OCI-LY7 (cell line): ENCODE measurements at regions of chr2 and their contacts with region 1.

Region 1: GRCh38 chr2:226906163-226906693 is 70.4 kb downstream of the RHBDD1 start:
- DNase-seq: peak; percentile 93
- H3K4me3 ChIP-seq: peak overlapping the region; percentile 70
- H3K27ac ChIP-seq: peak overlapping the region; percentile 98
- H3K4me1 ChIP-seq: peaks cover 95% of the 10 kb centered on the region
- CTCF ChIP-seq: no peak

Region 2: GRCh38 chr2:225270861-225271260 is 1635.4 kb before region 1 on chr2:
- CTCF ChIA-PET with region 1: no interaction called
- POLR2A ChIA-PET with region 1: no interaction called
- intact Hi-C with region 1: loop called (anchors 10 kb)
- DNase-seq: peak; percentile 92
- H3K4me3 ChIP-seq: peak overlapping the region; percentile 3
- H3K27ac ChIP-seq: peak overlapping the region; percentile 77
- H3K4me1 ChIP-seq: peaks cover 53% of the 10 kb centered on the region
- CTCF ChIP-seq: peak; percentile 38; the same call in 1 of the 2 replicates

Region 3: DNA sequence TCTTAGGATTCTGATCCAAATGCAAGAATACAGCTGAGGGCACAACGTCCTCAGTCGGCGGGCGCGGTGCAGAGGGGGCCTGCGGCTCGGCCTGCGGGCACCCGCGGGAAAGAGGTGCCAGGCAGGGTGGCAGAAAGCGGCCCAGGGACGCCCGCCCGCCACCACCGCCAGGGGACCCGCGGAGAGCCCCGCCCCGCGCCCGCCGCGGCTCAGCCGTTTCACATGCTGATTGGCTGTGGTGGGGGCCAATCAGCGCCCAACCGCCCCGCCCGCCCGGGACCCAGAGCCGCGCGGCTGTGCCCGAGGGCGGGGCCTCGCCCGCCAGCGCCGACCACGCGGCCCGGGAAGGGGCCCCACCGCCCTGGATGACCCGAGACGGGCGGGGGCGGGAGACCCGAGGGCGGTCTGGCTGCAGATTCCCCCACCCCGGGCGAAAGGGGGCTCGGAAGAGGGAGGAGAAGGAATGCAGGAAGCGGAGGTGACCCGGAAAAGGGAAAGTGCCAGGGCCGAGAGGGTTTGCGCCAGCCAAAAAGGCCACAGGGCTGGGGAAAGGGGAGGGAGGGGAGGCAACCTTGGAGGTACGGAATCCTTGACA is 114.6 kb before region 1 on chr2:
- CTCF ChIA-PET with region 1: no interaction called
- POLR2A ChIA-PET with region 1: interaction called, 3 read pairs
- intact Hi-C with region 1: loop called (anchors 2 kb)
- DNase-seq: peak; percentile 92
- H3K4me3 ChIP-seq: peak overlapping the region; percentile 73
- H3K27ac ChIP-seq: peak overlapping the region; percentile 79
- H3K4me1 ChIP-seq: peaks cover 58% of the 10 kb centered on the region
- CTCF ChIP-seq: peak; percentile 43; the same call in 1 of the 2 replicates

Region 4: GRCh38 chr2:226875438-226876225 is 30.6 kb before region 1 on chr2:
- CTCF ChIA-PET with region 1: no interaction called
- POLR2A ChIA-PET with region 1: interaction called, 4 read pairs
- intact Hi-C with region 1: loop called (anchors 1 kb)
- DNase-seq: no peak
- H3K4me3 ChIP-seq: no peak overlapping the region
- H3K27ac ChIP-seq: no peak overlapping the region
- H3K4me1 ChIP-seq: peaks cover 16% of the 10 kb centered on the region
- CTCF ChIP-seq: 0 out of 2 replicates have a peak, but pooled peaks have one; percentile 25

Region 5: GRCh38 chr2:226916669-226917068 is 10.4 kb after region 1 on chr2:
- CTCF ChIA-PET with region 1: no interaction called
- POLR2A ChIA-PET with region 1: interaction called, 20 read pairs
- intact Hi-C with region 1: no loop called
- DNase-seq: peak; percentile 79
- H3K4me3 ChIP-seq: peak overlapping the region; percentile 12
- H3K27ac ChIP-seq: peak overlapping the region; percentile 75
- H3K4me1 ChIP-seq: peaks cover 59% of the 10 kb centered on the region
- CTCF ChIP-seq: peak; percentile 21; the same call in 1 of the 2 replicates

Region 6: GRCh38 chr2:226984750-226985582 is 78.7 kb after region 1 on chr2:
- CTCF ChIA-PET with region 1: no interaction called
- POLR2A ChIA-PET with region 1: interaction called, 56 read pairs
- intact Hi-C with region 1: loop called (anchors 1 kb)
- DNase-seq: peak; percentile 83
- H3K4me3 ChIP-seq: peak overlapping the region; percentile 33
- H3K27ac ChIP-seq: peak overlapping the region; percentile 89
- H3K4me1 ChIP-seq: peaks cover 60% of the 10 kb centered on the region
- CTCF ChIP-seq: peak; percentile 95